HepG2 (cell line): ENCODE measurements at regions of chr5 and their contacts with region 1.

Region 1: GRCh38 chr5:91928754-91929521 is 545.8 kb upstream of the ARRDC3 start:
- DNase-seq: no peak
- ATAC-seq: no peak
- H3K4me3 ChIP-seq: no peak overlapping the region
- H3K27ac ChIP-seq: no peak overlapping the region
- H3K4me1 ChIP-seq: no peaks in the 10 kb centered on the region
- H3K27me3 ChIP-seq: no peaks in the 10 kb centered on the region
- CTCF ChIP-seq: peak; percentile 29; the same call in 1 of the 2 replicates
- EP300 ChIP-seq: no peak
- POLR2A ChIP-seq: no peak
- RAD21 ChIP-seq: no peak

Region 2: DNA sequence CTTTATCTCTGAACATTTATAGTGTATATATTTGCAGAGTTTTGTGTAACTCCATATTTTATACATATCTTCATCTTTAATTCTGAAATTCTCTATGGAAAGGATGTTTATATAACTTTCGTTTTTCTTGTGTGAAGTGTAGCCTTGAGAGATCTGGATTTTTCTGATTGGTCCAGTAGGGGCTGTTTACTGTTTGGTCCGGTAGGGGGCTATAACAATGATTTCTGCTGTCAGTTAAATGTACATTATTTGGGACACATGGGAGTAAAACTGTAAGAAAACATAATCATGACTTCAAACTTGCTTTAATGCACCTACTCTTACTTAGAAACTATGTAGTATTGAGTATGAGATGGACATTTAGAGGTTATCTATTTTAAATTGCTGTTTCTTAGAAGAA is 18.7 kb before region 1 on chr5:
- CTCF ChIA-PET with region 1: no interaction called
- POLR2A ChIA-PET with region 1: no interaction called
- in situ Hi-C with region 1: no loop called
- intact Hi-C with region 1: loop called (anchors 1 kb)
- DNase-seq: no peak
- ATAC-seq: no peak
- H3K4me3 ChIP-seq: no peak overlapping the region
- H3K27ac ChIP-seq: no peak overlapping the region
- H3K4me1 ChIP-seq: no peaks in the 10 kb centered on the region
- H3K27me3 ChIP-seq: no peaks in the 10 kb centered on the region
- CTCF ChIP-seq: no peak
- EP300 ChIP-seq: no peak
- POLR2A ChIP-seq: no peak
- RAD21 ChIP-seq: no peak